ENCODE measurements at regions of chr7 and their contacts with region 1.

Region 1: DNA sequence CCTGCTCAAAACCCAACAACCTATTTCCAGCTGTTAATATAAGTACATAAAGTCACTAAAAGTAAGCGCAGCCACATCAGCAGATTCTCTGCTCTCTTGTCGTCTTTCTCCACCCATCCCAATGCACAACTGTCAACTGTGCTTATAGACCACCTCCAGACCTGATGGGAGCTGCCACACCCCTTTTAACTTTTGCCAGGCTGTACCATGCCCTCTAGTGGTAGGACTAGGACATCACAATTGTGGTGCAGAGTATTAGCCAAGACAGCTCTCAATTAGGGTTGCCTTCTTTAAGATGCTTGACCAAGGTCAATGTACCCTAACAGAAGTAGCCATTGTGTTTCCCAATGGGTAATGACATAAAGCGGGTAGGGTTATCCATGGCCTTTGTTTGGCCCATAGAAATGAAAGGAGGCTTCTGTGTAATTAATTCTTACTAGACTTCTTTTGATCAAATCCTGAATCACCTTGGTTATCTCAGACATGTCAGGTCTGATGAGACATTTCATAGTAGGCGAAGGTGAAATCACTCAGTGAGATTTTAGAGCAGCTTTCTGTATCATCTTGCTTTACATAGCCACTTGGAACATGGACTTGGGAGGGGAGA is 68.1 kb downstream of the SCRN1 start:
- DNase-seq: peak; percentile 69
- ATAC-seq: peak; percentile 83
- H3K4me3 ChIP-seq: no peak overlapping the region
- H3K4me3 Mint-ChIP-seq: no peak overlapping the region
- H3K27ac ChIP-seq: no peak overlapping the region
- H3K27ac Mint-ChIP-seq: no peak overlapping the region
- H3K4me1 ChIP-seq: no peaks in the 10 kb centered on the region
- H3K4me1 Mint-ChIP-seq: no peaks in the 10 kb centered on the region
- H3K27me3 ChIP-seq: no peaks in the 10 kb centered on the region
- H3K27me3 Mint-ChIP-seq: no peaks in the 10 kb centered on the region
- CTCF ChIP-seq: peak; percentile 94

Region 2: DNA sequence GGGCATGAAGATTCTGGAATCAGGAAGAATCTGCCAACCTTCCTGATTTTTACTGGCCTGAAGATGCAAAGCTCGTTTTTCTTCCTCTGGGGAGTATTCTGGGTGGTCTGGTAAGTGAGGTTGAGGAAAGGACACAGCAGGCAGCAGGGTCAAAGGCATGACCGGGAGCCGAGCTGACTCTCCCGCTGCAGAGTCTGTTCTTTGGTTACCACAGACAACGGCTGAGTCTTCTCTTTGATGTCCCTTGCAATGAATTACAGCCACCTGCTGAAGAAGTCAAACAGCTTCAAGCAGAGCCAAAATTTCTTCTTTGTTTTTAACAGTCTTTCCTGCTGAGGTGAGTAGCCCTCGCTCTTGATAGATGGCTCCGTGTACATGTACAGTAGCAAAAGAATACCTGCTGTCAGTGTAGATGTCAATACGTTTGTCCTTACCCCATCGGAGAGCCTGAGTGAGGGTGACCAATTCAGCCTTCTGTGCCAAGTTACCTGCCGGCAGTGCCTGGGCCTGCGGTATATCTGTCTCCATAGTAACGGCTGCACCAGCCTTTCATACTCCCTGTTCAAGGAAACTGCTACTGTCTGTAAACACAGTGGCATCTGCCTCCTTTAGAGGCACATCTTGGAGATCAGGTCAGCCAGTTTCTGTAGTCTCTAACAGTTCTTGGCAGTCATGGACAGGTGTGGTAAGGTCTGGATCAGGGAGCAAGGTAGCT is 281.5 kb before region 1 on chr7:
- CTCF ChIA-PET with region 1: interaction called, 16 read pairs
- POLR2A ChIA-PET with region 1: no interaction called
- intact Hi-C with region 1: no loop called
- DNase-seq: no peak
- ATAC-seq: no peak
- H3K4me3 ChIP-seq: no peak overlapping the region
- H3K4me3 Mint-ChIP-seq: no peak overlapping the region
- H3K27ac ChIP-seq: no peak overlapping the region
- H3K27ac Mint-ChIP-seq: no peak overlapping the region
- H3K4me1 ChIP-seq: no peaks in the 10 kb centered on the region
- H3K4me1 Mint-ChIP-seq: no peaks in the 10 kb centered on the region
- H3K27me3 ChIP-seq: no peaks in the 10 kb centered on the region
- H3K27me3 Mint-ChIP-seq: no peaks in the 10 kb centered on the region
- CTCF ChIP-seq: no peak

Region 3: GRCh38 chr7:29894256-29894655 is 27.3 kb before region 1 on chr7:
- CTCF ChIA-PET with region 1: no interaction called
- POLR2A ChIA-PET with region 1: no interaction called
- intact Hi-C with region 1: no loop called
- DNase-seq: no peak
- ATAC-seq: no peak
- H3K4me3 ChIP-seq: no peak overlapping the region
- H3K4me3 Mint-ChIP-seq: no peak overlapping the region
- H3K27ac ChIP-seq: no peak overlapping the region
- H3K27ac Mint-ChIP-seq: no peak overlapping the region
- H3K4me1 ChIP-seq: no peaks in the 10 kb centered on the region
- H3K4me1 Mint-ChIP-seq: no peaks in the 10 kb centered on the region
- H3K27me3 ChIP-seq: no peaks in the 10 kb centered on the region
- H3K27me3 Mint-ChIP-seq: peaks cover 20% of the 10 kb centered on the region
- CTCF ChIP-seq: no peak

Region 4: DNA sequence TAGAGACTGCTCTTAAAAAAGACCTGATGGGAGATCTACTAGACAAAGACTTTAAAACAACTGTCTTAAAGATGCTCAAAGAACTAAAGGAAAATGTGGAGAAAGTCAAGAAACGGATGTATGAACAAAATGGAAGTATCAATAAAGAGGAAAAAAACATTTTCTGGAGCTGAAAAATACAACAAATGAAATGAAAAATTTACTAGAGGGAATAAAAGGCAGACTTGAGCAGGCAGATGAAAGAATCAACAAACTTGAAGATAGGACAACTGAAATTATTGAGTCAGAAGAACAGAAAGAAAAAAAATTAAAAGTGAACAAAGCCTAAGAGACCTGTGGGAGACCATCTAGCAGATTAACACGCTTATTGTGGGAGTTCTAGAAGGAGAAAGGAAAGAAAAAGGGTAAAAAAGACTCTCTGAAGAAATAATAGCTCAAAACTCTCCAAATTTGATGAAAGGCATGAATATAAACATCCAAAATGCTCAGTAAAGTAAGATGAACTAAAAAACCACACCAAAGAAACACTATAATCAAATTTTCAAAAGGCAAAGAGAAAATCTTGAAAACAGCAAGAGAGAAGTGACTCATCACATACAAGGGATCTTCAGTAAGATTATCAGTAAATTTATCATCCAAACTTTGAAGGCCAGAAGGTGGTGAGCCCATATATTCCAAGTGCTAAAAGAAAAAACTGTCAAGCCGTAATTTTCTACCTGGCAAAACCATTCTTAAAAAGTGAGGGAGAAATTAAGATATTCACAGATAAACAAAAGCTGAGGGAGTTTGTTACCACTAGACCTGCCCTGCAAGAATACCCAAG is 15.1 kb before region 1 on chr7:
- CTCF ChIA-PET with region 1: interaction called, 21 read pairs
- POLR2A ChIA-PET with region 1: no interaction called
- intact Hi-C with region 1: no loop called
- DNase-seq: no peak
- ATAC-seq: no peak
- H3K4me3 ChIP-seq: no peak overlapping the region
- H3K4me3 Mint-ChIP-seq: no peak overlapping the region
- H3K27ac ChIP-seq: no peak overlapping the region
- H3K27ac Mint-ChIP-seq: no peak overlapping the region
- H3K4me1 ChIP-seq: no peaks in the 10 kb centered on the region
- H3K4me1 Mint-ChIP-seq: no peaks in the 10 kb centered on the region
- H3K27me3 ChIP-seq: no peaks in the 10 kb centered on the region
- H3K27me3 Mint-ChIP-seq: no peaks in the 10 kb centered on the region
- CTCF ChIP-seq: no peak

Region 5: GRCh38 chr7:29955799-29956486 is 34.4 kb after region 1 on chr7:
- CTCF ChIA-PET with region 1: interaction called, 19 read pairs
- POLR2A ChIA-PET with region 1: no interaction called
- intact Hi-C with region 1: no loop called
- DNase-seq: peak; percentile 42
- ATAC-seq: peak; percentile 77
- H3K4me3 ChIP-seq: no peak overlapping the region
- H3K4me3 Mint-ChIP-seq: peak overlapping the region; percentile 46
- H3K27ac ChIP-seq: peak overlapping the region in 1 of 2 donors; percentile 34
- H3K27ac Mint-ChIP-seq: peak overlapping the region; percentile 67
- H3K4me1 ChIP-seq: peaks cover 14 to 20% of the 10 kb centered on the region in 2 donors
- H3K4me1 Mint-ChIP-seq: peaks cover 32% of the 10 kb centered on the region
- H3K27me3 ChIP-seq: no peaks in the 10 kb centered on the region
- H3K27me3 Mint-ChIP-seq: no peaks in the 10 kb centered on the region
- CTCF ChIP-seq: no peak

Region 6: GRCh38 chr7:30564243-30564892 is 642.9 kb after region 1 on chr7:
- CTCF ChIA-PET with region 1: interaction called, 10 read pairs
- POLR2A ChIA-PET with region 1: no interaction called
- intact Hi-C with region 1: loop called (anchors 1 kb)
- DNase-seq: peak; percentile 80
- ATAC-seq: peak; percentile 93
- H3K4me3 ChIP-seq: no peak overlapping the region
- H3K4me3 Mint-ChIP-seq: no peak overlapping the region
- H3K27ac ChIP-seq: no peak overlapping the region
- H3K27ac Mint-ChIP-seq: no peak overlapping the region
- H3K4me1 ChIP-seq: no peaks in the 10 kb centered on the region
- H3K4me1 Mint-ChIP-seq: no peaks in the 10 kb centered on the region
- H3K27me3 ChIP-seq: no peaks in the 10 kb centered on the region
- H3K27me3 Mint-ChIP-seq: no peaks in the 10 kb centered on the region
- CTCF ChIP-seq: peak; percentile 92

Measured in B cell (primary cell).